ENCODE measurements at regions of chr5 and their contacts with region 1.

Region 1: GRCh38 chr5:78546276-78546996 is 102.1 kb downstream of the LHFPL2 start:
- DNase-seq: no peak
- H3K4me3 ChIP-seq: no peak overlapping the region
- H3K27ac ChIP-seq: peak overlapping the region; percentile 55
- H3K4me1 ChIP-seq: peaks cover 11% of the 10 kb centered on the region
- H3K27me3 ChIP-seq: no peaks in the 10 kb centered on the region
- CTCF ChIP-seq: no peak

Region 2: GRCh38 chr5:78492650-78493049 is 53.8 kb before region 1 on chr5:
- CTCF ChIA-PET with region 1: no interaction called
- POLR2A ChIA-PET with region 1: no interaction called
- intact Hi-C with region 1: loop called (anchors 1 kb)
- DNase-seq: no peak
- H3K4me3 ChIP-seq: no peak overlapping the region
- H3K27ac ChIP-seq: no peak overlapping the region
- H3K4me1 ChIP-seq: no peaks in the 10 kb centered on the region
- H3K27me3 ChIP-seq: no peaks in the 10 kb centered on the region
- CTCF ChIP-seq: no peak

Region 3: GRCh38 chr5:78509884-78510769 is 36.3 kb before region 1 on chr5:
- CTCF ChIA-PET with region 1: no interaction called
- POLR2A ChIA-PET with region 1: no interaction called
- intact Hi-C with region 1: no loop called
- DNase-seq: no peak
- H3K4me3 ChIP-seq: no peak overlapping the region
- H3K27ac ChIP-seq: no peak overlapping the region
- H3K4me1 ChIP-seq: no peaks in the 10 kb centered on the region
- H3K27me3 ChIP-seq: no peaks in the 10 kb centered on the region
- CTCF ChIP-seq: no peak

Region 4: GRCh38 chr5:78677777-78678668 is 131.6 kb after region 1 on chr5:
- CTCF ChIA-PET with region 1: no interaction called
- POLR2A ChIA-PET with region 1: no interaction called
- intact Hi-C with region 1: no loop called
- DNase-seq: peak; percentile 40
- H3K4me3 ChIP-seq: no peak overlapping the region
- H3K27ac ChIP-seq: no peak overlapping the region
- H3K4me1 ChIP-seq: peaks cover 3% of the 10 kb centered on the region
- H3K27me3 ChIP-seq: no peaks in the 10 kb centered on the region
- CTCF ChIP-seq: no peak